ENCODE measurements at regions of chr3 and their contacts with region 1.

Region 1: DNA sequence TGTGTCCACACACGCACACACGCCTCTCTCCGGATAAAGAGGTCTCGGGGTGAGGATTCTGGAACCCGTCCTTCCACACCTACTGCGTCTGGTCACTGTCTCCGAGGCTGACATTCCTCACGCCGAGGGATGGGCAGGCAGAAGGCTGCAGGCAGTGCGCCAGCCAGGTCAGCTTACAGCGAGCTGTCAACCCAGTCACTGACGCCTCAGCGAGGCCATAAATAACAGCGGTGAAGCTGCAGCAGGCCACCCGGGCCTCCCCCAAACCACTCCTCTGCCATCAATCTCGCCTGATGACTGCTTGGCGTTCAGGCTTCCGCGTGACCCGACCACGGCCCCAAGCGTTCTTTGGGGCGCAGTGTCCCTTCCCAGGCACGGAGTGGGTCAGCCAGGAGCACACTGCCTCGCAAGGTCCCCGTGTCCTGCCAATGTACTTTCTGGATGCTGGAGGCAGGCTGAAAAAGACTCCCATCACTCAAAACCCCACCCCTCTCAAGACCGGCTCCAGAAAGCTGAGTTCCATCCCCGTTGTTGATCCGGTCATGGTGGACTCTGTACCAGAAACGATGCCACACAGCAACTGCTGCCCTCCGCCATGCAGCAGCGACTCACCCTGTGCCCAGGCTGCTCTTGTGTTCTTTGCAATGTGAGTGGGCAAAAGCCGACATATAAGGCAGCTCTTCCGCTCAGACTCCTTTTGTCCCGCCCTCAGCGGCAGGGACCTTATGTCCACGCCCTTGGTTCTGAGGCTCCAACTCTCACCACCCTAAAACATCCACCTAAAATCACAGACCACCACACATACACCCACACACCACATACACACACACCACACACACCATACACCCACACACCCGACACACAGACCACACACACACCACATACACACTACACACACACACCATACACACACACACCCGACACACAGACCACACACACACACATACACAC is 27.1 kb downstream of the CPN2 start:
- DNase-seq: peak in 2 of 5 donors; percentile 43 to 60
- H3K4me3 ChIP-seq: peak overlapping the region; percentile 23
- H3K27ac ChIP-seq: no peak overlapping the region
- H3K4me1 ChIP-seq: peaks cover 8% of the 10 kb centered on the region
- H3K27me3 ChIP-seq: no peaks in the 10 kb centered on the region
- CTCF ChIP-seq: no peak
- EP300 ChIP-seq: no peak
- POLR2A ChIP-seq: no peak

Region 2: GRCh38 chr3:193457526-193457925 is 866.5 kb before region 1 on chr3:
- intact Hi-C with region 1: loop called in 1 of 4 experiments (anchors 5 kb)
- DNase-seq: no peak
- H3K4me3 ChIP-seq: no peak overlapping the region
- H3K27ac ChIP-seq: no peak overlapping the region
- H3K4me1 ChIP-seq: no peaks in the 10 kb centered on the region
- H3K27me3 ChIP-seq: no peaks in the 10 kb centered on the region
- CTCF ChIP-seq: no peak
- EP300 ChIP-seq: no peak
- POLR2A ChIP-seq: no peak

Region 3: DNA sequence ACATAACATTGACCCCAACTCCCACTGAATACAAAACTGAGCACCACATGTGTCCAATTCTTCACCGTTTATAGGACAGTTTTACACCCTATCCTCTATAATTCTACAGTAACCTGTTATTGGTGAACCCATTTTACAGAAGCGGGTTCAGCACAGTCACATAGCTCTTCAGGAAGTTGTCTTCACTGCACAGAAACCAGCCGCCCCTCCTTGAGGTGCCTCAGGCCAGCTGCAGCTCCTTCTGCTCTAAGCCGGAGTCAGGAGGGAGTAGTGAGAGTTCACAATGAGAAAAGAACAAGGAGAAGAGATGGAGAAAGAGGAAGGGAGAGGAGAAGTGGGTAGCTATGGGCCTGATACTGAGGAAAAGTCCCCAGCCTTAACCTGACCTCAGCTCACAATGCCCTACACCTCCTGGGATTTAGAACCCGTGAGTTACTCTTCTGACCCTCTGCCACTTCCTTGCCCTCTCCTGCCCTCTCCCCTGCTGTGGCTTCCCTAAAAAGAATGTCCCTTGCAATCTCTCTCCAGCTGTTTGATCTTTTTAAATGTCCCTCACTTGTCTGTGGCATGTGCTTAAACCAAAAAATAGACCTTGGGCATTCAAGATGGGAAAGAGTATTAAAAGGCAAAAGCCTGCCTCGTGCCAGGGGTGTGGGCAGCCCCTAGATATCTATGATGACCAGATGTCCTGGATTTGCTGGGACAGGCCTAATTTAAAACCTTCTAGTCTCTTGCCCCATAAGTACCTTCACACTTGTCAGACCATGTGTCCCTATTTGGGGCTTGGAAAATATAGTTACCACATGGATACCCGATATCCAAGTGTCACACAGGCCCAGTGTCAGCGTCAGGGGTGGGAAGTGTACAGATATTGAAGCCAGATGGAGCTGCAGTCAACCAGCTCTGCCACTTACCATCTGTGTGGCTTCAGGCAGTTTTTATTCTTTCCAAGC is 259.4 kb before region 1 on chr3:
- intact Hi-C with region 1: no loop called
- DNase-seq: no peak
- H3K4me3 ChIP-seq: no peak overlapping the region
- H3K27ac ChIP-seq: no peak overlapping the region
- H3K4me1 ChIP-seq: no peaks in the 10 kb centered on the region
- H3K27me3 ChIP-seq: no peaks in the 10 kb centered on the region
- CTCF ChIP-seq: no peak
- EP300 ChIP-seq: no peak
- POLR2A ChIP-seq: no peak

Region 4: GRCh38 chr3:194351952-194352536 is 28.0 kb after region 1 on chr3:
- intact Hi-C with region 1: no loop called
- DNase-seq: no peak
- H3K4me3 ChIP-seq: no peak overlapping the region
- H3K27ac ChIP-seq: no peak overlapping the region
- H3K4me1 ChIP-seq: peaks cover 12% of the 10 kb centered on the region
- H3K27me3 ChIP-seq: no peaks in the 10 kb centered on the region
- CTCF ChIP-seq: no peak
- EP300 ChIP-seq: no peak
- POLR2A ChIP-seq: no peak

Region 5: GRCh38 chr3:194556086-194557056 is 232.3 kb after region 1 on chr3:
- intact Hi-C with region 1: no loop called
- DNase-seq: peak in 2 of 5 donors; percentile 35 to 48
- H3K4me3 ChIP-seq: no peak overlapping the region
- H3K27ac ChIP-seq: no peak overlapping the region
- H3K4me1 ChIP-seq: peaks cover 11% of the 10 kb centered on the region
- H3K27me3 ChIP-seq: no peaks in the 10 kb centered on the region
- CTCF ChIP-seq: no peak
- EP300 ChIP-seq: no peak
- POLR2A ChIP-seq: no peak